Adrenal gland (tissue), 19 donors: ENCODE measurements at regions of chr17 and their contacts with region 1.

Region 1: GRCh38 chr17:37047631-37048104 is 98.9 kb downstream of the AATF start:
- DNase-seq: peak; percentile 79 to 95 (median 87)
- H3K4me3 ChIP-seq: no peak overlapping the region
- H3K27ac ChIP-seq: no peak overlapping the region
- H3K4me1 ChIP-seq: peaks cover 0 to 9% of the 10 kb centered on the region in 2 donors
- H3K27me3 ChIP-seq: no peaks in the 10 kb centered on the region
- CTCF ChIP-seq: peak; percentile 78 to 87 (median 82)
- POLR2A ChIP-seq: no peak

Region 2: GRCh38 chr17:36948717-36949460 is 98.8 kb before region 1 on chr17 and contains the start of gene AATF:
- intact Hi-C with region 1: loop called in 1 of 2 experiments (anchors 10 kb)
- DNase-seq: peak; percentile 96 to 98 (median 97)
- H3K4me3 ChIP-seq: peak within 1 kb of the TSS; percentile 72 to 88 (median 80)
- H3K27ac ChIP-seq: peak within 1 kb of the TSS; percentile 84 to 94 (median 86)
- H3K4me1 ChIP-seq: peaks cover 17 to 25% of the 10 kb centered on the region in 2 donors
- H3K27me3 ChIP-seq: peaks cover 38% of the 10 kb centered on the region
- CTCF ChIP-seq: no peak
- POLR2A ChIP-seq: peak; percentile 48 to 75
- total RNA-seq, gene AATF: 21.0 to 58.9 (median 36.6) TPM